MCF 10A (cell line): ENCODE measurements at regions of chr6 and their contacts with region 1.

Region 1: GRCh38 chr6:165245287-165245686 is 64.1 kb downstream of the C6orf118 start:
- DNase-seq: peak; percentile 55
- H3K4me3 Mint-ChIP-seq: no peak overlapping the region
- H3K27ac Mint-ChIP-seq: peak overlapping the region; percentile 20
- H3K4me1 Mint-ChIP-seq: peaks cover 6% of the 10 kb centered on the region
- H3K27me3 Mint-ChIP-seq: no peaks in the 10 kb centered on the region
- CTCF ChIP-seq: peak; percentile 50

Region 2: GRCh38 chr6:165055231-165055630 is 190.1 kb before region 1 on chr6:
- CTCF ChIA-PET with region 1: interaction called, 3 read pairs
- POLR2A ChIA-PET with region 1: no interaction called
- intact Hi-C with region 1: loop called (anchors 5 kb)
- DNase-seq: peak; percentile 69
- H3K4me3 Mint-ChIP-seq: no peak overlapping the region
- H3K27ac Mint-ChIP-seq: peak overlapping the region; percentile 12
- H3K4me1 Mint-ChIP-seq: peaks cover 22% of the 10 kb centered on the region
- H3K27me3 Mint-ChIP-seq: no peaks in the 10 kb centered on the region
- CTCF ChIP-seq: peak; percentile 16